Activated CD4-positive, alpha-beta T cell treated with anti-CD3 and anti-CD28 coated beads, Interleukin-2, amount 10 ng/mL, durations not matched to agents 24 days and 14 days (primary cell): ENCODE measurements at regions of chr6 and their contacts with region 1.

Region 1: DNA sequence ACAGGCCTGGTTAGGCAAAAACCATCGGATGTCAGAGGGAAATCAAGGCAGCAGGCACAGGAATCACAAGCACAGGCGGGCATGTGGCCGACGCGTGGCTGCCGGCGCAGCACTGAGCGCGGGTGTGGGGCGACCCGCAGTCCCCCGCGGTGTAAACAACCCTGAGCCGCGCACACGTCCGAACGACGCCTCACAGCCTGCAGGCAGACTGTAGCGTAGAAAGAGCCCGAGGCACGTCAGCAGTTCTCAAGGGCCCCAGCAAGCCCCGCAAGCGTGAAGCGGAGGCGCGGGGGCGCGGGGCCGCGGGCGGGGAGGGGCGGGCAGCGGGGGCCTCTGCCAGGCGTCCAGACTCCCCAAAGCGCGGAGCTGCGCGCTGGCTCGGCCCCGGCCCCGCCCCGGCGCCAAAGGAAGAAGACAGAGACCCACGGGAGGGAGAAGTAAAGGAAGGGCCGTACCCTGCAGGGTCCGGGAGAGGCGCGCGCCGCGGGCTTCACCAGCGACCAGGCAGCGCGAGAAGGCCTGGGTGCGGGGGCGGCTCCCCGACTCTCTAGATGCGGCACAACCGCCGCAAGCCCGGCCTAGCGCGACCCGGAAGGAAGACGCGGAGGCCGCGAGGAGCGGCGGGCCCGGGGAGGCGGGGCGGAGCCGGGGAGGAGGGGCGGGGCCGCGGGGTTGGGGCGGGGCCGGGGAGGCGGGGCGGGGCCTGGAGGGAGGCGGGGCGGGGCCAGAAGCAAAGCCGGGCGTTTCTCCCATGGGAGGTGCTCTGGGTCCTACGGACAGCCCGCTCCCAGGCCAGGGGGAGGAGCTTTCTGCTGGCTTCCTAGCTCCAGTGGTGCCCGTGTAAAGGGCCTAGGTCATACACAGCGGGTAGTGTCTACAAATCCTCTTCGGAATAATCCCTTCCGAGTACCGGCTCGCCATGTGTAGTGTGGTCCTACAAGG is at the start of gene FBXL4:
- DNase-seq: peak; percentile 94
- H3K4me3 Mint-ChIP-seq: peak within 1 kb of the TSS; percentile 97
- H3K27ac Mint-ChIP-seq: peak within 1 kb of the TSS; percentile 98
- H3K4me1 Mint-ChIP-seq: peaks cover 32% of the 10 kb centered on the region
- H3K27me3 Mint-ChIP-seq: peaks cover 27% of the 10 kb centered on the region
- total RNA-seq, gene FBXL4: 12.8 and 15.3 TPM in 2 replicates

Region 2: GRCh38 chr6:97282726-97283617 is 1664.7 kb before region 1 on chr6 and contains the start of gene MMS22L:
- intact Hi-C with region 1: loop called (anchors 5 kb)
- DNase-seq: peak; percentile 98
- H3K4me3 Mint-ChIP-seq: peak within 1 kb of the TSS; percentile 91
- H3K27ac Mint-ChIP-seq: peak within 1 kb of the TSS; percentile 94
- H3K4me1 Mint-ChIP-seq: peaks cover 23% of the 10 kb centered on the region
- H3K27me3 Mint-ChIP-seq: peaks cover 11% of the 10 kb centered on the region
- total RNA-seq, gene MMS22L: 54.8 and 65.2 TPM in 2 replicates

Region 3: DNA sequence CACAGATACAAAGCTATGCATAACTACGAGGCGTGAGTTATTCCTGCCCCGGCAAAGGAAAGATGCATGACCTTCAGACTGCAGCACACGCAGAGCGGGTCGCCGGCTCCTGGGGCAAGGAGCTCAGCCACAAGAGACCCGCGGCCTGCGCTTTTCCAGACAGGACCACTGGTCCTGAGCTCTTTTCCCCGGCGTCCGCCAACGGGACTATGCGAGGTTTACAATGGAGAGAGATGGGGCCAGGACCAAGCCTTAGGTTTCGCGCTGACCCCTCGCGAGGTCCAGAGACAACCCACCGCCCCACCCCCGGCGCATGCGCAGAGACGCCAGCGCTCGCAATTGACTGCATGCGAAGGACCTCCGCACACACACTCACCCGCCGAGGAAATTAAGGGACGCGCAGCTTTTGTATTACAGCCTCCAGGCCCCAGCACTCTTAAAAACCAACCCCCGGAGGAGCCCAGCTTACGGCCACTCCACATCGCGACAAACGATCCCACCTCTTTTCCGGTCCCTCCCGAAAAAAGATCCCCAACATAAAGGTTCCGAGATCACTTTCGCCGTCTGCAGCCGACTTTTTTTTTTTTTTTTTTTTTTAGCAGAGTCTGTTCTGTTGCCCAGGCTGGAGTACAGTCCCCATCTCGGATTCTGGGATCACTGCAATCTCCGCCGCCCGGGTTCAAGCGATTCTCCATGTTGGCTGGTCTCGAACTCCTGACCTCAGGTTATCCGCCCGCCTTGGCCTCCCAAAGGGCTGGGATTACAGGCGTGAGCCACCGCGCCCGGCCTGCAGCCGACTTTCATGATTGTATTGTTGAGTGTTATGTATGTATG is 446.3 kb after region 1 on chr6 and contains the start of gene COQ3:
- intact Hi-C with region 1: loop called (anchors 2 kb)
- DNase-seq: peak; percentile 91
- H3K4me3 Mint-ChIP-seq: peak within 1 kb of the TSS; percentile 96
- H3K27ac Mint-ChIP-seq: peak within 1 kb of the TSS; percentile 91
- H3K4me1 Mint-ChIP-seq: peaks cover 15% of the 10 kb centered on the region
- H3K27me3 Mint-ChIP-seq: no peaks in the 10 kb centered on the region
- total RNA-seq, gene COQ3: 13.4 and 14.4 TPM in 2 replicates